Dorsolateral prefrontal cortex (tissue), 120 donors: ENCODE measurements at regions of chr12 and their contacts with region 1.

Region 1: GRCh38 chr12:12611512-12612306 is at the start of gene CREBL2:
- DNase-seq: peak; percentile 88 to 93 (median 92)
- H3K4me3 ChIP-seq: peak within 1 kb of the TSS; percentile 53 to 98 (median 82)
- H3K27ac ChIP-seq: peak within 1 kb of the TSS; percentile 86 to 100 (median 98)
- H3K27me3 ChIP-seq: no peaks in the 10 kb centered on the region
- CTCF ChIP-seq: peak in 35 of 56 donors; percentile 3 to 57 (median 29)
- total RNA-seq, gene CREBL2: 26.6 to 75.3 (median 48.9) TPM

Region 2: GRCh38 chr12:12182703-12183365 is 428.9 kb before region 1 on chr12:
- intact Hi-C with region 1: no loop called
- DNase-seq: no peak
- H3K4me3 ChIP-seq: peak overlapping the region in 5 of 59 donors; percentile 1 to 15 (median 4)
- H3K27ac ChIP-seq: peak overlapping the region in 45 of 59 donors; percentile 8 to 70 (median 46)
- H3K27me3 ChIP-seq: no peaks in the 10 kb centered on the region
- CTCF ChIP-seq: no peak

Region 3: DNA sequence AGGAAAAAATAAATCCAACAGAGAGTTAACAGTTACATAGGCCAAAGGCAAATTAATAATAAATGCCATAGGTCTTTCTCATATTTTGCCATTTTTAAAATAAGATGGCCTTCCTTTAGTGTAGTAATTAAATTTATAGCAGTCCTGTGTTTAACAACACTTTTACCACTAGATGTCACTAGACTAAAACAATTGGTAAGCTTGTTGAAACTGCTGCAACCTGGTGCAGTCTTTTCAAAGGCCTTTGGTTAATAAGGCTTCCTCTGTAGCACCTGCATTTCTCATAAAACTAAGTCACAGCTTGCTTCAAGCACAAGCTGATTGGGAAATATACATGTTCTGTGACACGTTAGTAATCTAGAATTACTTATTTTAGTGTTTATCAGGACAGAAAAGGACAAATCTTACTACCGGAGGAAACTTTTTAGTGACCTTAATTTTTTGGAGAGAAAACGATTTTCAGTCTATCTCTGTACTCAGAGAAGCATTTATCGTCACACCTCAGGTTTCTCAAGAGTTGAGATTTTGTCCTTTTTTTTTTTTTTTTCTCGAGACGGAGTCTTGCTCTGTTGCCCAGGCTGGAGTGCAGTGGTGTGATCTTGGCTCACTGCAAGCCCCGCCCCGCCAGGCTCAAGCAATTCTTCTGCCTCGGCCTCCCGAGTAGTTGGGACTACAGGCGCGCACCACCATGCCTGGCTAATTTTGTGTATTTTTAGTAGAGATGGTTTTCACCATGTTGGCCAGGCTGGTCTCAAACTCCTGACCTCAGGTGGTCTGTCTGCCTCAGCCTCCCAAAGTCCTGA is 234.9 kb before region 1 on chr12:
- intact Hi-C with region 1: loop called in 1 of 2 experiments (anchors 2 kb)
- DNase-seq: peak in 1 of 10 donors; percentile 13
- H3K4me3 ChIP-seq: no peak overlapping the region
- H3K27ac ChIP-seq: peak overlapping the region in 53 of 59 donors; percentile 8 to 84 (median 55)
- H3K27me3 ChIP-seq: no peaks in the 10 kb centered on the region
- CTCF ChIP-seq: peak; percentile 68 to 96 (median 84)

Region 4: DNA sequence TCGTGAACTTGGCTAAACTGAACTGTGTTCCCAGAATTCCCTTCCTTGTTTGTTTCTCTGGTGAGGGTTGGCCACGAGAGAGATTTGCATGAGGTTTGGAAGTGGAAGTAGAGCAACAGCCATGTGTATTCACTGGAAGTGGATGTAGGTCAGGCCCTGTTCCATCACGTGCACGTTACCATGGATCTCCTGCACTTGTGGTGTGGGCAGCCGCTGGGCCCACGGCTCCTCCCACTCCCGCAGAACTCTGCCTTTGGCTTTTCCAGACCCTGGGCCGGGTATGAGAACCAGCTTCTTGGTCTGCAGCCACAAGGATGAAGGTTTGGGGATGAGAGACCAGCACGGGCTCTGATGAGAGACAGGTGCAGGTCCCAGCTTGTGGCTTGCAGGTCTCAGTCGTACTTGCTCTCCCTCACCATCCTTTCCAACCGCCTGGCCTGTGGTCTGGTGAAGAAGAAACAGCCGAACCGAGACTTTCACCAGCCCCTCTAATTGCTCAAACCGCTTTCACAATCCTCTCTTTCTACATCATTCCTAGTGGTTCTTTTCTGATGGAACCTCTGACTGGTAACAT is 143.9 kb before region 1 on chr12:
- intact Hi-C with region 1: no loop called
- DNase-seq: peak in 8 of 10 donors; percentile 6 to 60 (median 54)
- H3K4me3 ChIP-seq: peak overlapping the region in 1 of 59 donors; percentile 23
- H3K27ac ChIP-seq: peak overlapping the region; percentile 20 to 91 (median 76)
- H3K27me3 ChIP-seq: no peaks in the 10 kb centered on the region
- CTCF ChIP-seq: no peak

Region 5: DNA sequence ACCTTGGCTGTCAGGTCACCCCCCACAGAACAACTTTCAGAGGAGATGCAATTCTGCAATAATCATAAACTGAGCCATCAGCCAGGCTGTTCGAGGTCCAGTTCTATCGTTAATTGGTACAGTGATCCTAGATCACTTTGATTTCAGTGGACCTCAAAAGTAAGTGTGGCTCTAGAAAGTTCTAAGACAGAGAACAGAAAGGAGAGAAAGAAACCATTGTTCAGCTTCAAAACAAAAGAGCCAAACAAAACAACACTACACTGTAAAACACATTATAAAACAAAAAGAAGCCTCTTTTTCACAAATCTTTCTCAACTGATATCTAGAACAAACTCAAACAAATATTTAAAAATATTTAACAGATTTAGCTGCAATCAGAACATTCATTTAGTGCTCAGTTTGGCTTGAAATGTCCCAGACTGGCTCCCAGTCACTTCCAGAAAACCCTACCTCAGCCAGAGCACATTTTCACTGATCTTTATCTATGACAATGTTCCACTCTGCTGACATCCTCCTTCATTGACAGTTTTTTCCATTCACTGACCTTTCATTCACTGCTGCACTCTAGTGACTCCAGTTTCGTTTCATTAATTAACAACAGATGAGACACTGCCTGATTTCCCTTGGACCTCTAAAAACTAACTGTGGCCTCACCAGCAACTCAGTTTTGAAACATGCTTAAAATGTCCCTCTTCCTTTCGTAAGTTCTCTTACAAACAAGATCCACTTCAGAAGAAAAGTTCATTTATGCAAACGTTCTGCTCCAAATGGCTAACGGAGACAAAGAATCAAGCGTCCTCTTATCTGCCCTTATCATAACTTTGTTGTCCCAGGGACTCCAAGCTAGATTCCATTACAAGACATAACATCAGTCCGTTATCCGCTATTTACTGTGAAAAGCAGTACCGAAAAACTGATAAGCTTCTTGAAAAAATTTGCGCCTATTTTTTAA is 105.9 kb before region 1 on chr12:
- intact Hi-C with region 1: loop called in 1 of 2 experiments (anchors 10 kb)
- DNase-seq: no peak
- H3K4me3 ChIP-seq: peak overlapping the region in 44 of 59 donors; percentile 0 to 55 (median 34)
- H3K27ac ChIP-seq: peak overlapping the region; percentile 17 to 98 (median 86)
- H3K27me3 ChIP-seq: no peaks in the 10 kb centered on the region
- CTCF ChIP-seq: peak in 2 of 56 donors; percentile 13 to 17

Region 6: GRCh38 chr12:12654691-12655460 is 43.2 kb after region 1 on chr12:
- intact Hi-C with region 1: loop called in 1 of 2 experiments (anchors 5 kb)
- DNase-seq: no peak
- H3K4me3 ChIP-seq: no peak overlapping the region
- H3K27ac ChIP-seq: peak overlapping the region in 54 of 59 donors; percentile 1 to 90 (median 72)
- H3K27me3 ChIP-seq: no peaks in the 10 kb centered on the region
- CTCF ChIP-seq: no peak

Region 7: DNA sequence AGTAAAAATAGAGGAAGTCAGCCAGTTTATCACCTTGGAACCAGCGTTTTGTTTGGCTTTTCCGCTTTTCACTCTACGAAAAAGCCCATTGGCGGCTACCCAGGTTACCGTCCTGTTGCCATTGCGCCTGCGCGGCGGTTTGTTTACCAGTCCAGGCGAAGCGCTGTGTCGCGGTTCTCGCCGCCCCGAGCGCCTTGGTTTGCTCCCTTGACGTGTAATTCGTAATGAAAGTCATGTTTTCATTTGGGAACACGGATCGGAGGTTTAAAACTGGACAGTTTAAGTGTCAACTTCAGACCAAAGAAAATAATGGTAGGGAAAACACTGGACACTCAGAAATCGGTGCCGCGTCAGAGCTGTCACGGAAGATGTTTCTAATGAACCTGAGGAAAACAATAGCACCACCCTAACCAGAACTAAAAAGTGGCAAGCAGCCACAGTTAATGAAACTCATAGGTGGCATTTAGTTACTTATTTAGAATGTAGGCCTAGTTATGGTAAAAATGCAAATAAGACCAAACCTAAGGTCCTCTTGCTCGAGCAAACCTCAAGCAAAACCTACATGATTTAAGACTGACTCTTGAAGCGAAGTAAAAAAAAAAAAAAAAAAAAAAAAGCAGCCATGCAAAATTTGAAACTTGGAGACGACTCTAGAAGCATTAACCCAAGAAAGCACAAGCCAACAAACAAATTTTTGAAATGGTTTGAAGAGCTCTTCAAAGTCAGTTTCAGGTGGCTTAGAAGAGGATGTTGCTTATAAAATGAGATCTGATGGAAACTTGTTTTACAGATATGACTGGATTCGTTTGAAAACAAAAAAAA is 85.1 kb after region 1 on chr12:
- intact Hi-C with region 1: loop called (anchors 1 to 10 kb)
- DNase-seq: peak; percentile 84 to 91 (median 90)
- H3K4me3 ChIP-seq: peak overlapping the region; percentile 36 to 87 (median 68)
- H3K27ac ChIP-seq: peak overlapping the region; percentile 89 to 100 (median 99)
- H3K27me3 ChIP-seq: no peaks in the 10 kb centered on the region
- CTCF ChIP-seq: peak in 17 of 56 donors; percentile 2 to 44 (median 9)

Region 8: DNA sequence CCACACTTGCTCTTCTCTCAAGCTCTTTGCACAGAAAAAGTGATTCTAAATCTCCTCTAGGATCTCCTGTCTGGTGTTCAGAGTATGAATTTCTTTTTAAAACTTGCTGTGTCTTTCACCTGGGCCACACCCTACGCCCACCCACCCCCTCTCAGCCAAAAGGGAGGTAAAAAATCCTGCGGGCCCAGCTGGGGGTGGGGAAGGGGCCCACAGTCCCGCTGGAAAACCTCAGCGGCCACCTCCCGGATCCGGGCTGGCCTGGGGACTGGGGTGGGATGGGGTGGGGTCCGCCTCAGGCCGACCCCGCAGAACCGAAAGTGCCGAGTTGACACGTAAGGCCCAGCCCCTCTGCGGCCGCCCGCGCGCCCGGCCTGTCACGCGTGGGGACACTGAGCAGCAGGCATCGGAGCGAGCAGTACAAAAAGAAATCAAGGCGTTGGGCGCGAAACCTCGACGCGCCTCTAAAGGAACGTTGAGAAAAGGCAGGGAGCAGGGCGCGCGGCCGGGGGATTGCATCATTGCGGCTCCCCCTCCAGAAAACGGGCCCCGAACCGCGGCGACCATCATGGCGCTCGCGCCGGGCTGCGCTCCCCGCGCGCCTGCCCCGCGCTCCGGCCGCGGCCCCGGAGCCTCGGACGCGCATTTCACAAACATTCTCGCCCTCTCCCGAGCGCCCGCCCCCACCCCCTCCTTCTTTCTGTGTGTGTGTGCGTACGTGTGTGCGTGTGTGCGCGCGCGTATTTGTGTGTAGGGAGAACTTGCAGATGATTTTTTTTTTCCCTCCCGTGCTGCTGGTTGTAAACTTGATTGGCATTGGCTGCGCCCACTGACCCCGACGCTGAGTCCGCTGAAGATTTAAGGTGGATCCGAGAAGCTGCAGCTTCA is 113.2 kb after region 1 on chr12:
- intact Hi-C with region 1: loop called in 1 of 2 experiments (anchors 2 kb)
- DNase-seq: peak in 9 of 10 donors; percentile 73 to 94 (median 90)
- H3K4me3 ChIP-seq: peak overlapping the region; percentile 61 to 100 (median 83)
- H3K27ac ChIP-seq: peak overlapping the region; percentile 97 to 100 (median 100)
- H3K27me3 ChIP-seq: no peaks in the 10 kb centered on the region
- CTCF ChIP-seq: peak in 8 of 56 donors; percentile 6 to 34 (median 14)